CD4-positive, alpha-beta T cell (primary cell): ENCODE measurements at regions of chr11 and their contacts with region 1.

Region 1: DNA sequence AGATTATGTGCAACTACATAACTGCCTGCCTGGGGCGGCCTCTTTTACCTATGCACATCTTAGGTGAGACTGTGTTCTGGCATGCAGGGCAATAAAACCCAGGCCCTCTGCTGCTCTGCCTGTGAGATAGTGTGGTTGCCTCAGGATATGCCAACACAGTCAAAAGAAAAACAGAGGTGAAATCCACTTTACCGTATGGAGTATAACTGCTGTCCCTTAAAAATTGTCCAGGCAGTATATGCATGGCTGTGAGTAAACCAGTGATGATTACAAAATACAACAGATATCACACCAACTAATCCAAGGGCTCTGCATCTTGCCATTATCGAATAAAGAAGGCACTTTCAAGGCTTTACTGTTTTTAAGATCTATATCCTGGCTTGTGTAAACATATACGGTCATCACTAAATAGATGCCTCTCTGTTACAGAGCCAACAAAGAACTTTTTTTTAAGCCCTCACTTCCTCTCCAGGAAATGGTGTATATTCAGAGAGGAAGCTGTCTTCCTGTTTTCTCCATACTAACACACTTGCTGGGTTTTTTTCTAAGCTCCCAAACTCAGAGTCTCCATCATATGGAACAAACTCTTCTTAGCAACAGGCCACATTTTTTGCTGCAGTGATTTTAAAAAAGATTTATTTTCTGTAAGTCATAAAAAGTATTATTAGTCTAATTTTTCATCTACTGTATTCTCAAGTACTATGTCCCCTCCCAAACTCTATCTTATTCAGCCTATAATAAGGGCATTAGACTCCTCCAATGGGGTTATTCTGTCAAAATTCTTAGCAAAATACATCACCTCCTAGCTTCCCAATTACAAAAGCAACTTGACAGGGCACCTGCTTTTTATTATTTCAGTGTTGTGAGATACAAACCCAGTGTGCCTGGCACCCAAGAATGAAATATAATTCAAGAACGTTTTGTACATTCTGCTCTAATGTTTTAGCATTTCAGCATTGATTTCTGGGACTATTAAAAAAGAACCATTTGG is 135.2 kb downstream of the MAML2 start:
- DNase-seq: peak in 10 of 14 experiments; percentile 12 to 84 (median 32)
- ATAC-seq: peak; percentile 68
- H3K4me3 ChIP-seq: peak overlapping the region; percentile 22
- H3K4me3 Mint-ChIP-seq: peak overlapping the region; percentile 72
- H3K27ac ChIP-seq: peak overlapping the region; percentile 62 to 78
- H3K27ac Mint-ChIP-seq: peak overlapping the region; percentile 94
- H3K4me1 ChIP-seq: peaks cover 57% of the 10 kb centered on the region
- H3K4me1 Mint-ChIP-seq: peaks cover 86% of the 10 kb centered on the region
- H3K27me3 ChIP-seq: no peaks in the 10 kb centered on the region
- H3K27me3 Mint-ChIP-seq: no peaks in the 10 kb centered on the region
- CTCF ChIP-seq: no peak

Region 2: GRCh38 chr11:96012086-96012824 is 195.5 kb before region 1 on chr11:
- CTCF ChIA-PET with region 1: no interaction called
- POLR2A ChIA-PET with region 1: interaction called, 3 read pairs
- intact Hi-C with region 1: loop called in 1 of 2 experiments (anchors 5 kb)
- DNase-seq: peak; percentile 34 to 89 (median 57)
- ATAC-seq: peak; percentile 75
- H3K4me3 ChIP-seq: peak overlapping the region; percentile 24
- H3K4me3 Mint-ChIP-seq: peak overlapping the region; percentile 54
- H3K27ac ChIP-seq: peak overlapping the region; percentile 10 to 82
- H3K27ac Mint-ChIP-seq: no peak overlapping the region
- H3K4me1 ChIP-seq: peaks cover 33% of the 10 kb centered on the region
- H3K4me1 Mint-ChIP-seq: peaks cover 21% of the 10 kb centered on the region
- H3K27me3 ChIP-seq: no peaks in the 10 kb centered on the region
- H3K27me3 Mint-ChIP-seq: no peaks in the 10 kb centered on the region
- CTCF ChIP-seq: peak; percentile 39

Region 3: DNA sequence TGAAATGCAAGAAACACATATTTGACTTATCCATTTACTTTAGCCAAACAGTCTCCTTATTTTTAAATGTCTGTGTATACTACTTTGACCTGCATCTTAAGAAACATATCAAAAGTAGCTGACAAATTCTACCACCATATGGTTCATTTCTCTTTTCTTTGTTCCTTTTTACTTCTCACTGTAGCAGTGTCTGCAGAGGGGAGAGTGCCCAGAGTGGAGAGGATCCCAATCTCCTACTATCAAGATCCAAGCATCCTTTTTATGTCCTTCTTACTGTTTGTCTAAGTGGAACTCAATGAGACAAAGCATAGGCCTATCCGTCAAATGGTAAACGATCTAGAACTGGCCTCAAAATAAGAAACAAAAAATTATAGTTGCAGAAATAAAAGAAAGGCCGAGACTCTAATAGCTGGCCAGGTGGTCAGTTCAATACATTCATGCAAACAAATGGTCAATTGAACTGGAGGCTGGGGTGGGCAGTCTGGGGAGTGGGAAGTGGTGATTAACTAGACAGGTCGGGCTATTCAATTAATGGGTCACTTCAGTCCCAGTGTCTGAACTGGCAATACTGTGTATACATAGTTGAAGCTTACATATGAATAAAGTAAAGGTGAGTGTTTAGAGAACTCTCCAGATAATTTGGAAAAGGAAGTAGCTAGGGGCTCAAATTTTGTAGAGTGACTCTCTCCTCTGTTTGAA is 13.9 kb before region 1 on chr11:
- CTCF ChIA-PET with region 1: interaction called, 3 read pairs
- POLR2A ChIA-PET with region 1: interaction called, 21 read pairs
- intact Hi-C with region 1: no loop called
- DNase-seq: no peak
- ATAC-seq: peak; percentile 32
- H3K4me3 ChIP-seq: no peak overlapping the region
- H3K4me3 Mint-ChIP-seq: peak overlapping the region; percentile 74
- H3K27ac ChIP-seq: no peak overlapping the region
- H3K27ac Mint-ChIP-seq: peak overlapping the region; percentile 87
- H3K4me1 ChIP-seq: peaks cover 25% of the 10 kb centered on the region
- H3K4me1 Mint-ChIP-seq: peaks cover 94% of the 10 kb centered on the region
- H3K27me3 ChIP-seq: no peaks in the 10 kb centered on the region
- H3K27me3 Mint-ChIP-seq: no peaks in the 10 kb centered on the region
- CTCF ChIP-seq: no peak